OCI-LY7 (cell line): ENCODE measurements at regions of chr9 and their contacts with region 1.

Region 1: DNA sequence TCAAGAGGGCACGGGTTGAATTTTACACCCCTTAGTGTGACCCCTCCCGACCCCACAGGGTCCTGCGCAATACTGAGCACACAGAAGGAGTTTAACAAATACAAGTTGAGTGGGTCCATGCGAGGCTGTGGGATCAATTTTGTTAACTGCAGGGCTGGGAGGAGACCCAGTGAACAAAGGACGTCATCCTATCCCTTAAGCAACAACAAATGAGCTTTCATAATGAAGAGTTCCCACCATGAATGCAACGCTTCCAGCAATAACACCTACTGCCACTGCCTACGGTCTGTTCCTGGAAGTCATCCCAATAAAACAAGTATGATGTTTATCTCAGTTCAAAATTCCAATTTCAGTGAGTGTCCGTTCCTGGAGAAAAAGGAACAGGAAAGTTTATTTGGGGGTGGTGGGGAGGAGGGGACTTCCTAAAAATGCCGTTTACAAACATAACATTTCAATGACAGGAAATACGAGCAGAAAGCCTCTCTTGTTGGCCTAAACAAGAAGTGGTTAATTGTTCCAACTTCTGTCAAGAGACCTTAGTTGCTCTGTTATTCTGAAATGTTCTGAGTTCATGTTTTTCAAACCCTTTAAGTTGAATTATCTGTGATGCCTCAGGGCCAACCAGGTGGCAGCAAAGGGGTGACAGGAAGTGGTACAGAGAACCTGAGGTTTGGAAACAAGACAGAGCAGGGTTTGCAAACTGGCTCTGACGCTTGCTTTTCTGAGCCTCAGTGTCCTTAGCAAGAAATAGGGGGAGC is 65.8 kb upstream of the PLPP6 start:
- DNase-seq: peak; percentile 35
- H3K4me3 ChIP-seq: no peak overlapping the region
- H3K27ac ChIP-seq: no peak overlapping the region
- H3K4me1 ChIP-seq: no peaks in the 10 kb centered on the region
- CTCF ChIP-seq: no peak

Region 2: GRCh38 chr9:4464911-4465513 is 131.3 kb before region 1 on chr9:
- CTCF ChIA-PET with region 1: interaction called, 13 read pairs
- POLR2A ChIA-PET with region 1: no interaction called
- intact Hi-C with region 1: no loop called
- DNase-seq: no peak
- H3K4me3 ChIP-seq: no peak overlapping the region
- H3K27ac ChIP-seq: no peak overlapping the region
- H3K4me1 ChIP-seq: no peaks in the 10 kb centered on the region
- CTCF ChIP-seq: no peak